Activated CD4-positive, alpha-beta T cell treated with anti-CD3 and anti-CD28 coated beads, Interleukin-2, amount 10 ng/mL, durations not matched to agents 24 days and 14 days (primary cell): ENCODE measurements at regions of chr2 and their contacts with region 1.

Region 1: DNA sequence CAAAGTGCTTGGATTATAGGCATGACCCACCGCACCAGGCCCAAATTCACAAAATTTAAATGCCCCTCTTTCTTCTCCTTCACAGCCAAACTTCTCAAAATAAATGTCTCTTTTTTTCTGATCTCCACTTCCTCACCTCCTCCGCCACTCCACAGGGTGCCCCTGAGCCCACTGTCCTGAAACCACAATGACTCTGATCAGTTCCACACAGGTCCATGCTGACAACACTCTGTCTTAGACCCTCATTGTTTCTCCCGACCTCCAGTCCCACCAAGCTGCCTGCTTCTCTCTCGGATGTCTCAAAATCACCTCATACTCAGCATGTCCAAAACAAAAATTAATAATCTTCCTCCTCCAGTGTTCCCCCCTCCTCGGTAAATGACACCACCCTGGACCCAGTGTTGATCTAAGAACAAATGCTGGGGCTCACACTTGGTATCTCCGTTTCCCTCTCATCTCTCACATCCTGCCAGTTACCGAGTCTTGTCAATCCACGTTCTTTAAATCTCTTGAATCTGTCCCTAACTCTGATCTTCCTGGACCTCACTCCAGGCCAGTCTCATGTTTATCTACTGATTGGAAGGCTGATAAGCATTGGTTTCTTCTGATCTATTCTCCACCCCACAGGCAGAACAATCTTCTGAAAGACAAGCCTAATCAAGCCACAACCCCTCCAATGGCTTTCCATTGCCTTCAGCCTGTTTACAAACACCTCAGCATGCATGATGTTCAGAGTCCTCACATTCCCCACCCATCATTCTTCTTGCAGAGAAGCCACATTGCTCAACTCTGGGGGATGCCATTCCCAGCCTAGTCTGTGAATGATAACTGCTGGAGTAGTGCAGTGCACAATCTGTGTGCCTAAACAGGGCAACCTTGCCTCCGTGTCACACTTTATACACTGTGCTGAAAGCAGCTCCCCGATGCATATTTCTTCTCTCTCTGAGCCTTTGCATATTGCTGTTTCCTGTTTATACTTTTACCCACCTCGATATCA is 12.4 kb upstream of the ANKRD44 start:
- DNase-seq: peak; percentile 77
- H3K4me3 Mint-ChIP-seq: peak overlapping the region; percentile 82
- H3K27ac Mint-ChIP-seq: peak overlapping the region; percentile 96
- H3K4me1 Mint-ChIP-seq: peaks cover 53% of the 10 kb centered on the region
- H3K27me3 Mint-ChIP-seq: no peaks in the 10 kb centered on the region

Region 2: DNA sequence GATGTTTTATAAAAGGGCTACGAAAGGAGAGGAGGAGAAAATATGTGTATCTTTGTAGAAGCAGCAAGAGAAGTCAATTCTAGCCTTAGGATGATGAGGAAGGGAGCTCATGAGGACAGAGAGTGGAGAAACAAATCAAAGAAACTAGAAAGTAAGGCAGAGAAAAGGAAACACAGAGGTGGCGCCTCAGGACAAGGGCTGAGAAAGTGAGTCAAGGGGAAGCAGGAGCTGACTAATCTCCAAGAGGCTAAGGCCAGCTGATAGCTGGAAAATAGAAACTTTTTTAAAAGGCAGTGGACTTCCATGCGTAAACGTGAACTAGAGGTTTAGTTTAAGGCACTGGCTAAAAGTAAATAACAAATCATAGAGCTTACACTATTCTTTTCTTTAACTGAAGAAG is 185.8 kb before region 1 on chr2:
- intact Hi-C with region 1: loop called (anchors 5 kb)
- DNase-seq: no peak
- H3K4me3 Mint-ChIP-seq: peak overlapping the region; percentile 1
- H3K27ac Mint-ChIP-seq: peak overlapping the region; percentile 73
- H3K4me1 Mint-ChIP-seq: peaks cover 65% of the 10 kb centered on the region
- H3K27me3 Mint-ChIP-seq: no peaks in the 10 kb centered on the region

Region 3: GRCh38 chr2:197339496-197340220 is 16.6 kb after region 1 on chr2:
- intact Hi-C with region 1: loop called (anchors 1 kb)
- DNase-seq: no peak
- H3K4me3 Mint-ChIP-seq: no peak overlapping the region
- H3K27ac Mint-ChIP-seq: peak overlapping the region; percentile 14
- H3K4me1 Mint-ChIP-seq: peaks cover 14% of the 10 kb centered on the region
- H3K27me3 Mint-ChIP-seq: no peaks in the 10 kb centered on the region

Region 4: GRCh38 chr2:197356136-197356535 is 33.1 kb after region 1 on chr2:
- intact Hi-C with region 1: loop called (anchors 2 kb)
- DNase-seq: no peak
- H3K4me3 Mint-ChIP-seq: peak overlapping the region; percentile 22
- H3K27ac Mint-ChIP-seq: peak overlapping the region; percentile 80
- H3K4me1 Mint-ChIP-seq: peaks cover 15% of the 10 kb centered on the region
- H3K27me3 Mint-ChIP-seq: no peaks in the 10 kb centered on the region